ENCODE measurements at regions of chr1 and their contacts with region 1.

Region 1: GRCh38 chr1:116139592-116140134 is 28.5 kb downstream of the MAB21L3 start:
- DNase-seq: no peak
- ATAC-seq: no peak
- H3K4me3 Mint-ChIP-seq: no peak overlapping the region
- H3K27ac Mint-ChIP-seq: no peak overlapping the region
- H3K4me1 Mint-ChIP-seq: peaks cover 6% of the 10 kb centered on the region
- H3K27me3 Mint-ChIP-seq: no peaks in the 10 kb centered on the region
- CTCF ChIP-seq: no peak

Region 2: DNA sequence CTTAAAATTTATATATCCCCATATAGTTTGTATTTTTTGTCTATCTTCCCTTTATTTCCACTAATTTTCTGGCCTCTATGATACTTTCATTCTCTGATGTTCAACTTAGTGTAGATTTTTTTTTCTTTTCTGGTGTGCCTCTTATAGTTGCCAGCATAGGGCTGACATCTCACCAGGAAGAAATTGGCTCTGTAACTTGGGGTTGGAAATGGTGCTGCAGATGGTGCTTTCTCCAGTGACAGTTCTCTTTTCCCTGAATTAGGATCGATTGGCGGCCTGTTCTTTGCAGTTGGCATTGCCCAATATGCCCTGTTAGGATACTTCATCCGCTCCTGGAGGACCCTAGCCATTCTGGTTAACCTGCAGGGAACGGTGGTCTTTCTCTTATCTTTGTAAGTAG is 113.0 kb before region 1 on chr1:
- CTCF ChIA-PET with region 1: no interaction called
- POLR2A ChIA-PET with region 1: no interaction called
- DNase-seq: no peak
- ATAC-seq: no peak
- H3K4me3 Mint-ChIP-seq: no peak overlapping the region
- H3K27ac Mint-ChIP-seq: no peak overlapping the region
- H3K4me1 Mint-ChIP-seq: peaks cover 3% of the 10 kb centered on the region; the same call in 1 of the 2 replicates
- H3K27me3 Mint-ChIP-seq: no peaks in the 10 kb centered on the region
- CTCF ChIP-seq: no peak

Region 3: DNA sequence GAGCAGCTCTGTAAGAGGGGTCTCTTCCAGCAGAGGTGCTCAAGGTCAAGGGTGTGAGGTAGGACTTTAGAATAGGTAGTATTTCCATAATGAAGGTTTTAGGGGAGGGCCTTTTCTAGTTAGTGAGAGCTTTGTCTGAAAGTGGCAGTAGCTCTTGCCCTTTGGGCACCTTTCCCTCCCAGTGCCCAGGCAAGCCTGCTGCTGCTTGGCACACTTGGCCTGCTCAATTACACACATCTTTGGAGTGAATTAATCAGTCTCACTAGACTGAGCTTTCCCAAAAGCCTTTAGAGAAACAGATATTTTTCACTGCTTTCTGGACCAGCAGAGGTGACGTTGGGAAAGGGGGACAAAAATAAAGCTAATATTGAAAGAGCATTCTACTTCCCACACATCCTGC is 19.5 kb after region 1 on chr1:
- CTCF ChIA-PET with region 1: interaction called, 29 read pairs
- POLR2A ChIA-PET with region 1: no interaction called
- DNase-seq: no peak
- ATAC-seq: no peak
- H3K4me3 Mint-ChIP-seq: no peak overlapping the region
- H3K27ac Mint-ChIP-seq: no peak overlapping the region
- H3K4me1 Mint-ChIP-seq: peaks cover 8% of the 10 kb centered on the region
- H3K27me3 Mint-ChIP-seq: peaks cover 1% of the 10 kb centered on the region; the same call in 1 of the 2 replicates
- CTCF ChIP-seq: no peak

Region 4: GRCh38 chr1:116270316-116271057 is 130.8 kb after region 1 on chr1:
- CTCF ChIA-PET with region 1: interaction called, 13 read pairs
- POLR2A ChIA-PET with region 1: no interaction called
- DNase-seq: no peak
- ATAC-seq: 0 out of 2 replicates have a peak, but pooled peaks have one; percentile 28
- H3K4me3 Mint-ChIP-seq: no peak overlapping the region
- H3K27ac Mint-ChIP-seq: no peak overlapping the region
- H3K4me1 Mint-ChIP-seq: no peaks in the 10 kb centered on the region
- H3K27me3 Mint-ChIP-seq: no peaks in the 10 kb centered on the region; the same call in 1 of the 2 replicates
- CTCF ChIP-seq: no peak

Region 5: GRCh38 chr1:116397728-116398127 is 258.1 kb after region 1 on chr1:
- CTCF ChIA-PET with region 1: interaction called, 11 read pairs
- POLR2A ChIA-PET with region 1: no interaction called
- DNase-seq: no peak
- ATAC-seq: peak; percentile 55; the same call in 1 of the 2 replicates
- H3K4me3 Mint-ChIP-seq: no peak overlapping the region
- H3K27ac Mint-ChIP-seq: no peak overlapping the region
- H3K4me1 Mint-ChIP-seq: peaks cover 17% of the 10 kb centered on the region
- H3K27me3 Mint-ChIP-seq: no peaks in the 10 kb centered on the region
- CTCF ChIP-seq: no peak

Region 6: DNA sequence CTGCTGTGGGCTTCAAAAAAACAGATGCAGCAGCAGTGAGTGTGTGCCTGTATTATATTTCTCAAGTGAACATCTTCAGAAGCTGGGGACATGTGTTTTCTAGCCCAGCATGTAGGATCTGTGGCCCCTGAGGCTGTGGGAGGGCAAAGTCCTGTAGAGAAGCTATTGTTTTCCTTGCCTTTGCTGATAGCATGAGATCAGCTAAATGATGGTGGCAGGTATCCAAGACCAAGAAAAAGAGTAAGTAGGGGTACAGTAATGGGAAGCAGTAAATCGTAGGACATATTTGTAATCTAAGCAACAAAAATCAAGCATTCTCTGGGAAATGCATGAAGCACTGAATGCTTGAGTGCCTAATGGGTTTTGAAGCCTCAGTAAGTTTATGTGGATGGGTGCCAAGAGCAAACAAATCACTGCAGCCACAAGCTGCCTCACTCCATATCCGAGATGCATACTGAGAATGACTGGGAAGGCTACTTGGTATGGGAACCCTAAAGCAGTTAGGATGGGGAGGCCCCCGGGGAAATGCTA is 332.8 kb after region 1 on chr1:
- CTCF ChIA-PET with region 1: interaction called, 16 read pairs
- POLR2A ChIA-PET with region 1: no interaction called
- DNase-seq: no peak
- ATAC-seq: no peak
- H3K4me3 Mint-ChIP-seq: no peak overlapping the region
- H3K27ac Mint-ChIP-seq: no peak overlapping the region
- H3K4me1 Mint-ChIP-seq: peaks cover 13% of the 10 kb centered on the region
- H3K27me3 Mint-ChIP-seq: no peaks in the 10 kb centered on the region
- CTCF ChIP-seq: no peak

Region 7: DNA sequence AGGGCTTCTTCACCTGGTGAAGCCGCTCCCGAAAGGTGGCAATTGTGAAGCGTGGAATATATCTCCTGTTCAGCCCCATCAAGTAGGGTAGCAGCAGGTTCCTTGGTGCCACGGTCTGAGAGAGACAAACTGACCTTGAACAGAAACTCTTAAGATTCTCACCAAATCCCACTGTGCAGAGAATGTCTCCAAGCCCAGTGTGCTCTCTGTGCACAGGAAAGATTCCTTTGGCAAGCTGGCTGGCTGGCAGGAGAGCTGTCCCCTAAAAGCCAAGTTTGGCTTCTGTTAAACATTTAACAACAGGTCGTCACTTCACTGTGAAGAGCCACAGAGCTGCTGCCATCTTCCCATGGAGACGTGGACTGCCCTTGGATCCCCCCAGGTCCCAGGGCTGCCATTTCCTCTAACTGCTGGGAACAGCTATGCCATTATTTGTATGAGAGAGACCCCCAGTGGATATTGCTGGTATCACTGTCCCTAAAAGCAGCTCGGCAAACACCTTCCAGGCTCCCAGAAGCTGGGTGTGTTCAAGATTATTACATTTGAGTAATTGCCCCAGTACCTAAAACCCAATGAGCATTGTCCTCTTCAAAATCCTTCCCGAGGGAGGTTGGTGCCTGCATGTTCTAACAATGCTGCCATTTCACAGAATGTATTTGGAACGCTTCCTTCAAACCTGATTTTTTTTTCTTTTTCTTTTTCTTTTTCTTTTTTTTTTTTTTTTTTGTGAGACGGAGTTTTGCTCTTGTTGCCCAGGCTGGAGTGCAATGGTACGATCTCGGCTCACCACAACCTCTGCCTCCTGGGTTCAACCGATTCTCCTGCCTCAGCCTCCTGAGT is 359.3 kb after region 1 on chr1:
- CTCF ChIA-PET with region 1: interaction called, 161 read pairs
- POLR2A ChIA-PET with region 1: no interaction called
- DNase-seq: peak; percentile 68
- ATAC-seq: peak; percentile 88
- H3K4me3 Mint-ChIP-seq: no peak overlapping the region
- H3K27ac Mint-ChIP-seq: no peak overlapping the region
- H3K4me1 Mint-ChIP-seq: peaks cover 16% of the 10 kb centered on the region
- H3K27me3 Mint-ChIP-seq: no peaks in the 10 kb centered on the region
- CTCF ChIP-seq: peak; percentile 67